HEK293 (cell line): ENCODE measurements at regions of chr11 and their contacts with region 1.

Region 1: DNA sequence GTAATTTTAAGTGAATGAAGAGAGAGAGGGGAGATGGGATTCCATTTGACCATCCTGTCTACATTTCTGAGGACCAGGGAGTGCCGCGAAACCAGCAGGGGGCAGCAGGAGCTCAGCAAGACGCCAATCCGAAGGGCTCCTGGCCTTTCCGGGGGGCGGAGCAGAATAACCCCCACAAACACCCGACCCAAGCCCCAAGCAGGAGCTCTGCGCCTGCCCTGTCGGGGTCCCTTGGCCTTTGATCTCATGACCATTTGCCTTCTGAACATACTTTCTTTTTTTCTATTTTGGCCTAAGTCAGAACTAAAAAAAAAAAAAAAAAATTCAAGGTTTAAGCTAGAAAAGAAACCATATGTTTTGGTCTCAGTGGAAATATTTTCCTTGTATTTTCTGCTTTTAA is 21.9 kb upstream of the SCN2B start:
- H3K4me3 ChIP-seq: no peak overlapping the region; the same call in 1 of the 2 replicates
- H3K27ac ChIP-seq: no peak overlapping the region
- H3K4me1 ChIP-seq: no peaks in the 10 kb centered on the region
- CTCF ChIP-seq: peak; percentile 54

Region 2: GRCh38 chr11:118098996-118099837 is 99.2 kb before region 1 on chr11:
- CTCF ChIA-PET with region 1: no interaction called
- POLR2A ChIA-PET with region 1: no interaction called
- H3K4me3 ChIP-seq: no peak overlapping the region
- H3K27ac ChIP-seq: no peak overlapping the region
- H3K4me1 ChIP-seq: no peaks in the 10 kb centered on the region
- CTCF ChIP-seq: no peak

Region 3: GRCh38 chr11:118145285-118146227 is 52.8 kb before region 1 on chr11:
- CTCF ChIA-PET with region 1: interaction called, 16 read pairs
- POLR2A ChIA-PET with region 1: no interaction called
- H3K4me3 ChIP-seq: peak overlapping the region; percentile 55
- H3K27ac ChIP-seq: no peak overlapping the region; the same call in 1 of the 2 replicates
- H3K4me1 ChIP-seq: no peaks in the 10 kb centered on the region
- CTCF ChIP-seq: peak; percentile 82

Region 4: DNA sequence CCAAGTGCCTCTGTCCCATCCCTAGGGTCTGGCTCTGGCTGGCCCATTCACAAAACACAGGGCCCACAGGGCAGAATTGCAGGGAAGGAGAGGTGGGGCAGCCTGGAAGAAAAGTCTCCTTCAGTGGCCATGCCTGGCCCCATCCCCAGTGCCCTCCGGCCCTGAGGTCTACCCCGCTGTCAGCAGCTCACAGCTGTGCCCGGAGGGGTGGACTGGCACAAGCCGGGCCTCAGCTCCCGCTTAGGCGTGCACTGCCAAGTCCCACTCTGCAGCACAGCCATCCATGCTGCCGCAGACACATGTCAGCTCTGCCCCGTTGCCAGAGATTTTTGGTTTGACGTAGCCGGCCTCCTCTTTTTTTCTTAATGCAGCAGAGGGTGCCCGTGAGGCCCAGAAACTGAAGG is 18.1 kb before region 1 on chr11:
- CTCF ChIA-PET with region 1: interaction called, 29 read pairs
- POLR2A ChIA-PET with region 1: no interaction called
- H3K4me3 ChIP-seq: no peak overlapping the region
- H3K27ac ChIP-seq: no peak overlapping the region
- H3K4me1 ChIP-seq: no peaks in the 10 kb centered on the region
- CTCF ChIP-seq: no peak

Region 5: DNA sequence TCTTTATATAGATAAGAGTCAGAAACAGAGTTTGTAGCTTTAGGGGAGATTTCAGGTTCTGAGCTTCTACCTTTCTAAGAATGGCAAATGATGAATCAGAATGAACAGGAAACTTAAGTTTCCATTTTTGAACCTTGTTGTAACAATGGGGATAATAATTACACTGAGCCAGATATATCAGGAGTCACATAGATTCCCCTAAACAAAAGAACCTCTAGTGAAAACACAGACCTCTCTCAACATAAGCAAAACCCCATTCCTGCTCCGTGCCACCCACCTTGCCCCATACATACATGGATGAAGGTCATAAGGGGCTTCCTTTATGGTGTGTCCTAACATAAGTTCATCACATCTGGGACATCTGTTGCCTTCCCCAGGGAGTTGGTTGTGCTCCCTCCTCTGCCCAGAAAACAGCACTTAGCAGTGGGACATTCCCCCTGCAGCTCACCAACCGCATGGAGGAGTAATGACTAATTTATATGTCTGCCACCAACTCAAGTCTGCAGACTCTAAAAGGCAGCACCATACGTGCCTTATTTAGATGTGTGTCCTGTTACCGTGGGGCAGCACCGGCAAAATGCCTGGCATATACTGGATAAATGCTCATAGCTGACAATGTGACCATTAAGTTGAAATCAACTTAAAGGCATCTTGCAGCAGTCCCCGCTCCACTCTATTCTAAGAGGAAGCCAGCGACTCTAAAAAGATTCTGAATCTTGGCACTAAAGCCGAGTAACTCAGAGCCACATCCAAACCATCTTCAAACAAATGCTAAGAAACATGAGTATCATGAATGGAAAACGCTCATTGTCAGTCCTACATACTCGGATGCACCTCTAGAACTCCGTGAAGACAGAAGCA is 18.5 kb after region 1 on chr11:
- CTCF ChIA-PET with region 1: interaction called, 31 read pairs
- POLR2A ChIA-PET with region 1: no interaction called
- H3K4me3 ChIP-seq: no peak overlapping the region
- H3K27ac ChIP-seq: no peak overlapping the region
- H3K4me1 ChIP-seq: no peaks in the 10 kb centered on the region
- CTCF ChIP-seq: no peak

Region 6: DNA sequence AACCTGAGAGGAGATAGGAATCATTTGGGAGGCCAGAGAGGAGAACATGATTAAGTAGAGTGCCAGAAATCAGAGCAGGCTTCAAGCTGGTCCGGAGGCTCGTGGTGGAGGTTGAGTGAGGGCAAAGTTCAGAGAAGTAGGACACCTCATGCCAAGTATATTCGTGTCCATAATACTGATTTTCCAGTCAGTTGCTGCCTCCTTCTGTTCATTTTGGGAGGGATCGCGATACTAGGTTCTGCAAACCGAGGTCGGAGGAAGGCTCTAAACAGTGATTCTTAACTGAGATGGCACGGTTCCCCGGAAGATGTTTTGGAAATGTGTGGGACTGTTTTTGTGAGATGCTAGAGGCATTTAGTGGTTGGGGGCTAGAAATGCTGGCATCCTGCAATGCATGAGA is 92.6 kb after region 1 on chr11:
- CTCF ChIA-PET with region 1: interaction called, 25 read pairs
- POLR2A ChIA-PET with region 1: no interaction called
- H3K4me3 ChIP-seq: no peak overlapping the region
- H3K27ac ChIP-seq: no peak overlapping the region
- H3K4me1 ChIP-seq: no peaks in the 10 kb centered on the region
- CTCF ChIP-seq: no peak

Region 7: DNA sequence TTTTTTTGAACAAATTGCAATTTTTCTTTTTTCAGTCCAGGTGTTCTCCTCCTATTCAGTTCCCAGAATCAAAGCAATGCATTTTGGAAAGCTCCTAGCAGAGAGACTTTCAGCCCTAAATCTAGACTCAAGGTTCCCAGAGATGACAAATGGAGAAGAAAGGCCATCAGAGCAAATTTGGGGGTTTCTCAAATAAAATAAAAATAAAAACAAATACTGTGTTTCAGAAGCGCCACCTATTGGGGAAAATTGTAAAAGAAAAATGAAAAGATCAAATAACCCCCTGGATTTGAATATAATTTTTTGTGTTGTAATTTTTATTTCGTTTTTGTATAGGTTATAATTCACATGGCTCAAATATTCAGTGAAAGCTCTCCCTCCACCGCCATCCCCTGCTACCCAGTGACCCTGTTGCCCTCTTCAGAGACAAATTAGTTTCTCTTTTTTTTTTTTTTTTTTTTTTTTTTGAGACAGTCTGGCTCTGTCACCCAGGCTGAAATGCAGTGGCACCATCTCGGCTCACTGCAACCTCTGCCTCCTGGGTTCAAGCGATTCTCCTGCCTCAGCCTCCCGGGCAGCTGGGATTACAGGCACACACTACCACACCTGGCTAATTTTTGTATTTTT is 154.8 kb after region 1 on chr11:
- CTCF ChIA-PET with region 1: interaction called, 52 read pairs
- POLR2A ChIA-PET with region 1: no interaction called
- H3K4me3 ChIP-seq: no peak overlapping the region
- H3K27ac ChIP-seq: no peak overlapping the region
- H3K4me1 ChIP-seq: no peaks in the 10 kb centered on the region
- CTCF ChIP-seq: no peak